ENCODE measurements at regions of chr21 and their contacts with region 1.

Region 1: GRCh38 chr21:36319765-36320420 is at the start of gene MORC3:
- DNase-seq: peak; percentile 97 to 99
- H3K4me3 ChIP-seq: peak within 1 kb of the TSS; percentile 77 to 97 (median 83)
- H3K27ac ChIP-seq: peak within 1 kb of the TSS; percentile 29; the same call in 1 of the 2 replicates
- H3K4me1 ChIP-seq: peaks cover 0 to 7% (median 2%) of the 10 kb centered on the region in 4 experiments; a peak in 4 of 7 replicates
- H3K27me3 ChIP-seq: no peaks in the 10 kb centered on the region
- CTCF ChIP-seq: no peak
- EP300 ChIP-seq: no peak
- POLR2A ChIP-seq: peak; percentile 59 to 95
- RAD21 ChIP-seq: no peak
- total RNA-seq, gene MORC3: 20.4 and 23.9 TPM in 2 replicates

Region 2: GRCh38 chr21:36297921-36298594 is 21.8 kb before region 1 on chr21:
- CTCF ChIA-PET with region 1: no interaction called
- POLR2A ChIA-PET with region 1: interaction called, 20 read pairs
- DNase-seq: no peak
- H3K4me3 ChIP-seq: no peak overlapping the region
- H3K27ac ChIP-seq: no peak overlapping the region
- H3K4me1 ChIP-seq: no peaks in the 10 kb centered on the region
- H3K27me3 ChIP-seq: no peaks in the 10 kb centered on the region
- CTCF ChIP-seq: no peak
- EP300 ChIP-seq: no peak
- POLR2A ChIP-seq: no peak
- RAD21 ChIP-seq: no peak

Region 3: GRCh38 chr21:36330904-36331303 is 11.0 kb after region 1 on chr21:
- CTCF ChIA-PET with region 1: interaction called, 33 read pairs
- POLR2A ChIA-PET with region 1: interaction called, 6 read pairs
- DNase-seq: no peak
- H3K4me3 ChIP-seq: no peak overlapping the region
- H3K27ac ChIP-seq: no peak overlapping the region
- H3K4me1 ChIP-seq: no peaks in the 10 kb centered on the region
- H3K27me3 ChIP-seq: no peaks in the 10 kb centered on the region
- CTCF ChIP-seq: peak in 2 of 3 experiments; percentile 66 to 81; a peak in 3 of 4 replicates
- EP300 ChIP-seq: no peak
- POLR2A ChIP-seq: no peak
- RAD21 ChIP-seq: peak; percentile 76 to 77